ENCODE measurements at regions of chr5 and their contacts with region 1.

Region 1: GRCh38 chr5:67003935-67004729 is 192.5 kb downstream of the CD180 start:
- DNase-seq: peak; percentile 96
- H3K4me3 Mint-ChIP-seq: peak overlapping the region; percentile 96
- H3K27ac Mint-ChIP-seq: peak overlapping the region; percentile 97
- H3K4me1 Mint-ChIP-seq: peaks cover 56% of the 10 kb centered on the region
- H3K27me3 Mint-ChIP-seq: no peaks in the 10 kb centered on the region

Region 2: GRCh38 chr5:65846101-65846500 is 1158.0 kb before region 1 on chr5:
- intact Hi-C with region 1: no loop called
- DNase-seq: no peak
- H3K4me3 Mint-ChIP-seq: no peak overlapping the region
- H3K27ac Mint-ChIP-seq: no peak overlapping the region
- H3K4me1 Mint-ChIP-seq: peaks cover 2% of the 10 kb centered on the region
- H3K27me3 Mint-ChIP-seq: peaks cover 14% of the 10 kb centered on the region

Region 3: GRCh38 chr5:66828548-66829357 is 175.4 kb before region 1 on chr5:
- intact Hi-C with region 1: loop called (anchors 5 kb)
- DNase-seq: peak; percentile 92
- H3K4me3 Mint-ChIP-seq: peak overlapping the region; percentile 93
- H3K27ac Mint-ChIP-seq: peak overlapping the region; percentile 93
- H3K4me1 Mint-ChIP-seq: peaks cover 56% of the 10 kb centered on the region
- H3K27me3 Mint-ChIP-seq: no peaks in the 10 kb centered on the region

Region 4: DNA sequence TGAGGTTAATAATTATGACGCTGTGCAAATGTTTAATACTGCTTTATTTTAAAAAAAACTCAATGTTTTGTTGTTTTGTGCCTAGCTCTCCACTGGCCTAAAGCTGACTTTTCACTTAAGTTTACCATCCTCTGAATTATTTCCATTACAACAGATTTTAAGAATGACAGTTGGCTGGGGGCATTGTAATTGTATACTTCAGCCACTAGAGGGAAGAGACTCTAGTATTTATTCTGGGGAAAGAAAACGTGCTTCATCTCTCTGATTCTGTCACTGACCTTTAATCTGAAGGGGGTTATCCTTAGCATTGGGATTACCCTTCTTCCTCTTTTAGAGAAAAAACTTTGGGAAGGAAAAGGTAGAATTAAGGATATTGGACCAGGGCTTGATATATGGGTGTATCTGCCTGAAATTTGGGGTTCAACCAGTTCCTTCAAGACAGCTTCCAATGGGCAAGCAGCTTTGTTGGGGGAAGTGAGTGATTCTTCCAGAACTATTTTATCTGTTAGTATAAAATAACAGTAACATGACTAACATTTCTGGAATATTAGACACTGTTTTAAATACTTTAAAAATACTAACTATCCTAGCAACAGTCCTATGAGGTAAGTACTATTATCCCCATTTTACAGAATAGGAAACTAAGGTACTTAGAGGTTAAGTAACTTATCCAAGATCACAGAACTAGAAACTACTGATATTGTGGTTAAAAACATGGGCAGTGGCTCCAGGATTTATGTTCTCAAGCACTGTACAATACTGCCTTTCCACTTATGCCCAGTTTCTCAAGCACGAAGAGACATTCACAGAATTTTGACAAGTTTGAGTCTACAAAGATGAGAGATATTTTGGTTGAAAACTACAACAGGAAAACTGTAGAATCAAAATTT is 15.9 kb before region 1 on chr5:
- intact Hi-C with region 1: loop called (anchors 2 kb)
- DNase-seq: peak; percentile 58
- H3K4me3 Mint-ChIP-seq: no peak overlapping the region
- H3K27ac Mint-ChIP-seq: no peak overlapping the region
- H3K4me1 Mint-ChIP-seq: peaks cover 4% of the 10 kb centered on the region
- H3K27me3 Mint-ChIP-seq: no peaks in the 10 kb centered on the region

Region 5: DNA sequence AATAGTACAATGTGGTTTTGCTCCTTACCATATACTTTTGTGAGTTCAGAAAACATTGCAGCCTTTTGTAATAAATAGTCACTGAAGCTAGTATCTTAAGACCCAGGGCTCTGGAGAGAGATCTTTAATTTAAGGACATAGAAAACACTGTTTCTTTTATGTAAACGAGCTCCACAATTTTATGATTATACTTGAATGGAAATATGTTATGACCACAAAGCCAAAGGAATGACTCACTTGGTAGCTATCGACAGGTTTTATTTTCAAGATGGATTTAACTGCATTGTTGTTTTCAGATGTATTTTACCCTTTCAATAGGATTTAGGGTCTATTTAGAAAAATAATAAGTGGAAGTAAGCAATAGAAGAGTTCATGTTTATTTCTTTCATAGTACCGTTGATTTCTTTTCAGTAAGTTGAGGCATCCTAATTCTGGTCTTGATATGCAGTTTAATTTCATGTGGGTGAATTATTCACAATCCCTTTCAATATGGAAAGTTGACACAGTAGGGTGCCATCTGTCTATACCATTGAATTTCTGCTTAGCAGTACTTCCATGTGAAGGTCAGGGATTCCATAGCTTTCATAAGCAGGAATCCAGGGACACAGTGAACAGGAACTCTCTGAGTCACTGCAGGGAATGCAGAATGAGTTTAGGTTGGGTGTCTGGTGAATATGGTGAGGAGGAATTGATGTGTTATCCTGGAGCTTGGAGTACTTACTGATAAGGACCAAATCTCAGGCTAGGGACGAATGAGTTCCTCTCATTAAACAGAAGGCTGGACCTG is 34.9 kb after region 1 on chr5:
- intact Hi-C with region 1: loop called (anchors 1 kb)
- DNase-seq: no peak
- H3K4me3 Mint-ChIP-seq: no peak overlapping the region
- H3K27ac Mint-ChIP-seq: peak overlapping the region; percentile 54
- H3K4me1 Mint-ChIP-seq: peaks cover 30% of the 10 kb centered on the region
- H3K27me3 Mint-ChIP-seq: no peaks in the 10 kb centered on the region

Region 6: DNA sequence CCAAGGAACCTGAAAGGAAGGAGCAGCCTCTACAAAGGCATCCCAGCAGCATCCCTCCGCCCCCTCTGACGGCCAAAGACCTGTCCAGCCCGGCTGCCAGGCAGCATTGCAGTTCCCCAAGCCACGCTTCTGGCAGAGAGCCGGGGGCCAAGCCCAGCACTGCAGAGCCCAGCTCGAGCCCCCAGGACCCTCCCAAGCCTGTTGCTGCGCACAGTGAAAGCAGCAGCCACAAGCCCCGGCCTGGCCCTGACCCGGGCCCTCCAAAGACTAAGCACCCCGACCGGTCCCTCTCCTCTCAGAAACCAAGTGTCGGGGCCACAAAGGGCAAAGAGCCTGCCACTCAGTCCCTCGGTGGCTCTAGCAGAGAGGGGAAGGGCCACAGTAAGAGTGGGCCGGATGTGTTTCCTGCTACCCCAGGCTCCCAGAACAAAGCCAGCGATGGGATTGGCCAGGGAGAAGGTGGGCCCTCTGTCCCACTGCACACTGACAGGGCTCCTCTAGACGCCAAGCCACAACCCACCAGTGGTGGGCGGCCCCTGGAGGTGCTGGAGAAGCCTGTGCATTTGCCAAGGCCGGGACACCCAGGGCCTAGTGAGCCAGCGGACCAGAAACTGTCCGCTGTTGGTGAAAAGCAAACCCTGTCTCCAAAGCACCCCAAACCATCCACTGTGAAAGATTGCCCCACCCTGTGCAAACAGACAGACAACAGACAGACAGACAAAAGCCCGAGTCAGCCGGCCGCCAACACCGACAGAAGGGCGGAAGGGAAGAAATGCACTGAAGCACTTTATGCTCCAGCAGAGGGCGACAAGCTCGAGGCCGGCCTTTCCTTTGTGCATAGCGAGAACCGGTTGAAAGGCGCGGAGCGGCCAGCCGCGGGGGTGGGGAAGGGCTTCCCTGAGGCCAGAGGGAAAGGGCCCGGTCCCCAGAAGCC is 161.7 kb after region 1 on chr5:
- intact Hi-C with region 1: loop called (anchors 5 kb)
- DNase-seq: peak; percentile 96
- H3K4me3 Mint-ChIP-seq: peak overlapping the region; percentile 89
- H3K27ac Mint-ChIP-seq: peak overlapping the region; percentile 96
- H3K4me1 Mint-ChIP-seq: peaks cover 65% of the 10 kb centered on the region
- H3K27me3 Mint-ChIP-seq: no peaks in the 10 kb centered on the region

Region 7: DNA sequence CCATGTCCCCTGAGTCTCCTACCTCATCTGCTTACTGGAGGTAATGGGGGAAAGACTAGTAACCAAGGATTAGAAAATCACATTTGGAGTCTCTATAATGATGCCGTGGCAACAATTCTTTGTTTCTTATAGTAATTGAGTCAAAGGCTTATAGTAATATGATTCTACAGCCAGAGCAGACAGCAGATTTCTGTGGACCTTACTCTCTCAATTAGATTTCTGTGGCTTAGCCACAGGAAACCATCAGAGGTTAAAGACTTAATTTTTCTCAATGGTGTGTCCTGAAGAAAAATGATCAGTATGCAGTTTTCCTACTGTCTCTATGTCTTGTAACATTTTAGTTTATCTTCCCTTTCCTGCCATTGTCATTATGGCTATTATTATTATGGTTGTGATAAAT is 251.7 kb after region 1 on chr5:
- intact Hi-C with region 1: no loop called
- DNase-seq: peak; percentile 19
- H3K4me3 Mint-ChIP-seq: no peak overlapping the region
- H3K27ac Mint-ChIP-seq: no peak overlapping the region
- H3K4me1 Mint-ChIP-seq: no peaks in the 10 kb centered on the region
- H3K27me3 Mint-ChIP-seq: peaks cover 8% of the 10 kb centered on the region

Region 8: GRCh38 chr5:67301285-67301903 is 297.3 kb after region 1 on chr5:
- intact Hi-C with region 1: no loop called
- DNase-seq: no peak
- H3K4me3 Mint-ChIP-seq: no peak overlapping the region
- H3K27ac Mint-ChIP-seq: no peak overlapping the region
- H3K4me1 Mint-ChIP-seq: peaks cover 4% of the 10 kb centered on the region
- H3K27me3 Mint-ChIP-seq: no peaks in the 10 kb centered on the region

Region 9: DNA sequence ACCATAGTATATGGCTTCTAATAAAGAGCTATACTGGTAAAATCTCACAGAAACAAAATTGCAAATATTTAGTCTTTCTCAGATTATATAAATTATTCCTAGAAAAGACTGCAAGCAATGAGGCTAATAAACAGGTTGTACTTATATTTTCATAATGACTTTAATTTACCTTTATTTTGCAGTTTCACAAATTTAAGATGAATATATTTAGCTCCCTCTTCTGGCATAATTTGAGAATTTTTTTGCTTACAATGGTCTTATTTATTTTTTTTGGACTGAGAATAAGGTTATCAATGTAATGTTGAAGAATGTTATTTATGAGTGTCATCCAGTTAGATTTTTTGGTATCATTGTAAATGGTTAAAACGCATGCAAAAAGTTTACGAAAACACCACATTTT is 1268.2 kb after region 1 on chr5:
- intact Hi-C with region 1: loop called (anchors 10 kb)
- DNase-seq: no peak
- H3K4me3 Mint-ChIP-seq: no peak overlapping the region
- H3K27ac Mint-ChIP-seq: no peak overlapping the region
- H3K4me1 Mint-ChIP-seq: peaks cover 57% of the 10 kb centered on the region
- H3K27me3 Mint-ChIP-seq: no peaks in the 10 kb centered on the region

Region 10: DNA sequence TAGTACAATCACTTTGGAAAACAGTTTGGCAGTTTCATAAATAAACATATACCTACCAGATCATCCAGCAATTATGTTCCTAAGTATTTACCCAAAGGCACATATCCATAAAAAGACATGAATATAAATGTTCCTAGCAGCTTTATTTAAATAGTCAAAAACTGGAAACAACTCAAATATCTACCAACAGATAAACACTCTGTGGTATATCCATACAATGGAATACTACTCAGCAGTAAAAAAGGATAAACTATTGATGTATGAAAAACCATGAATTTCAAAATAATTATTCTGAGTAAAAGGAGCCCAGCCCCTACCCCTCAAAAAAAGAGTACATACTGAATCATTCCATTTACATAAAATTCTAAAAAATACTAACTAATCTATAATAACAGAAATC is 1857.0 kb after region 1 on chr5:
- intact Hi-C with region 1: no loop called
- DNase-seq: no peak
- H3K4me3 Mint-ChIP-seq: no peak overlapping the region
- H3K27ac Mint-ChIP-seq: no peak overlapping the region
- H3K4me1 Mint-ChIP-seq: no peaks in the 10 kb centered on the region
- H3K27me3 Mint-ChIP-seq: peaks cover 6% of the 10 kb centered on the region

Measured in activated CD4-positive, alpha-beta T cell treated with anti-CD3 and anti-CD28 coated beads, Interleukin-2, amount 10 ng/mL, durations not matched to agents 24 days and 14 days (primary cell).